ENCODE measurements at regions of chr9 and their contacts with region 1.

Region 1: DNA sequence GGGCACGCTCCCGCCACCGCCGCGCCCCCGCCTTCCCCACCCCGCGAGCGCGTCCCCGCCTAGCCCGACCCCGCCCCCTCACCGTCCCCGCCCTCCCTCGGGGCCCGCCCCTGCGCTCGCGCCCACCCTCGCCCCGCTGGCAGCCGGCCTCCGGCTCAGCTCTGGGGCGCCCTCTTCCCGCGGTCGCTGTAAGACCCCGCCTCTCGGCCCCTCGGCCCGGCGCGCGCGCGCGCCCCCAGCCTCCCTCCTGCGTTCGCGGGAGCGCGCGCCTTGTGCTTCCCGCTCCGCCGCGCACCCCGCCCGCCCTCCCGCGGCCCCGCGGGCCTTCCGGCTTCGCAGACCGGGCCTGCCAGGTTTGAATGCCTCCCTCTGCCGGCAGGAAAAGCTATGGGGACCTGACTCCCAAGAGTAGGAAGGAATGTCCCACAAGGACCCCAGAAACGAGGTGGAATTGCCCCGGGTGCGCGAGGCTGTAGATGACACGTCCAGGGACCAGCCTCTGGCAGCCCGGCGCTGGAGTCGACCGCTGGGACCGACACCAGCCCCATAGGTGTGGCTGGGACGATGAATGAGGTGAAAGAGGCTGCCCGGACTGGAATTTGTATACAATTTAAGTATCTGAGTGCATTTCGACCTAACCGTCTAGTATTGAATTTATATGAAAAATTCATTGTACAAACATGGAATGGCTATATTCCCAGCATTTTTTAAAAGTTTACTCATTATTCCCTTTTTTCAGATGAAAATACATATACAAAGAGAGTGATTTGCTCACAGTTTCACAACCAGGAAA is 416 bp upstream of the PTBP3 start:
- DNase-seq: peak; percentile 93
- H3K4me3 Mint-ChIP-seq: peak overlapping the region; percentile 90
- H3K27ac Mint-ChIP-seq: peak overlapping the region; percentile 95
- H3K4me1 Mint-ChIP-seq: peaks cover 21% of the 10 kb centered on the region
- H3K27me3 Mint-ChIP-seq: no peaks in the 10 kb centered on the region

Region 2: DNA sequence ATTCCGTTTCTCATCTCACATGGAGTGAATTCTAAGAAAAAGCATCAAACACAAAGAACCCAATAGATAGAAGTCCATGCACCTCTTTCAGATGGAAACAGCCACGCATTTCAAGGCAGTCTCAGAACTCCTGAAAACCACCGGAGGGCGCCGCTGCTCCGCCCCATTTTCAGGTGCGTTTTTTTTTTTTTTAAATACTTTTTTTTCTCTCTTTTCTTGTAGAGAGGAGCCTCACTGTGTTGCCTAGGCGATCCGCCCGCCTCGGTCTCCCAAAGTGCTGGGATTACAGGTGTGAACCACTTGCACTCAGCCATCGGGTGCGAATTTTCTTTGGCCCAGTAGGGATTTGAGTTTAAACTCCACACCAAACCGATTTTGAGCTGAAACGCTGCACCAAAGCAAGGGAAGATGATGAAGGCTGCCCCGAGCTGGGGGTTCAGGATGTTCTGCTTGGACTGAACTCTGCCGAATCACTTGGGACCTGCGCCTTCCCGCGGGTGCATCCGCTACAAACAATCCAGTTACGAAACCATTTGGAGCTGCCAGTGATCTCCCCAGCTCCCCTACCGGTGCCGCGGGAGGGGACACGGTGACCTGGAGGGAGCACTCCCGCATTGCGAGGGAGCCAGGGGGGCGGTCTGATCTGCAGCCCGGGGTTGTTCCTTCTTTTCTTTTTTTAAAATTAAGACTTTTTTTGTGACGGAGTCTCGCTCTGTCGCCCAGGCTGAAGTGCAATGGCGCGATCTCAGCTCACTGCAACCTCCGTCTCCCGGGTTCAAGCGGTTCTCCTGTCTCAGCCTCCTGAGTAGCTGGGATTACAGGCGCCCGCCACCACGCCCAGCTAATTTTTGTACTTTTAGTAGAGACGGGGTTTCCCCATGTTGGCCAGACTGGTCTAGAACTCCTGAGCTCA is 735.8 kb before region 1 on chr9:
- CTCF ChIA-PET with region 1: no interaction called
- intact Hi-C with region 1: loop called (anchors 5 kb)
- DNase-seq: peak; percentile 81
- H3K4me3 Mint-ChIP-seq: peak overlapping the region; percentile 80
- H3K27ac Mint-ChIP-seq: no peak overlapping the region
- H3K4me1 Mint-ChIP-seq: peaks cover 12% of the 10 kb centered on the region
- H3K27me3 Mint-ChIP-seq: peaks cover 27% of the 10 kb centered on the region

Region 3: DNA sequence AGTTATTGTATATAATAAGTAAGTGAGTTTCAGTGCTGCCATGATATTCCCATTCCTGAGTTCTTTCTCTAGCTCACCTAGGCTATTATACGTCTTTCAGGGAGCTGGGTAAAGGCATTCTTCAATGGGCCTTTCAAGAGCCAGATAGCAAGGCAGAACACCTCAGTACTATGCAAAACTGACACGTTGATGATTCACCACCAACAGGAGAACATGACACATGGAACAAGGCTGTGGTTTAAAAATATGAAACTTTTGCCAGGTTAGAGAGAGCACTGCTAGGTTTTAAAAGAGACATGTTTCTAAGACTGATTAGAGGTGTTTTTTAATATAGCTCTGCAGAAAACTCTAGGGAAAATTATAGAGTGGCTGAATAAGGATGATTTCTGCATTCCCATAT is 341.3 kb before region 1 on chr9:
- CTCF ChIA-PET with region 1: no interaction called
- intact Hi-C with region 1: loop called (anchors 5 kb)
- DNase-seq: peak; percentile 61
- H3K4me3 Mint-ChIP-seq: no peak overlapping the region
- H3K27ac Mint-ChIP-seq: no peak overlapping the region
- H3K4me1 Mint-ChIP-seq: peaks cover 31% of the 10 kb centered on the region
- H3K27me3 Mint-ChIP-seq: no peaks in the 10 kb centered on the region

Region 4: GRCh38 chr9:112104901-112105300 is 228.9 kb before region 1 on chr9:
- CTCF ChIA-PET with region 1: no interaction called
- intact Hi-C with region 1: no loop called
- DNase-seq: no peak
- H3K4me3 Mint-ChIP-seq: no peak overlapping the region
- H3K27ac Mint-ChIP-seq: no peak overlapping the region
- H3K4me1 Mint-ChIP-seq: no peaks in the 10 kb centered on the region
- H3K27me3 Mint-ChIP-seq: no peaks in the 10 kb centered on the region

Region 5: GRCh38 chr9:112119225-112120029 is 214.4 kb before region 1 on chr9:
- CTCF ChIA-PET with region 1: interaction called, 3 read pairs
- intact Hi-C with region 1: loop called (anchors 1 kb)
- DNase-seq: no peak
- H3K4me3 Mint-ChIP-seq: no peak overlapping the region
- H3K27ac Mint-ChIP-seq: no peak overlapping the region
- H3K4me1 Mint-ChIP-seq: peaks cover 12% of the 10 kb centered on the region
- H3K27me3 Mint-ChIP-seq: no peaks in the 10 kb centered on the region

Region 6: GRCh38 chr9:112315331-112316257 is 18.2 kb before region 1 on chr9:
- CTCF ChIA-PET with region 1: interaction called, 7 read pairs
- intact Hi-C with region 1: loop called (anchors 1 kb)
- DNase-seq: no peak
- H3K4me3 Mint-ChIP-seq: no peak overlapping the region
- H3K27ac Mint-ChIP-seq: no peak overlapping the region
- H3K4me1 Mint-ChIP-seq: peaks cover 68% of the 10 kb centered on the region
- H3K27me3 Mint-ChIP-seq: no peaks in the 10 kb centered on the region

Region 7: DNA sequence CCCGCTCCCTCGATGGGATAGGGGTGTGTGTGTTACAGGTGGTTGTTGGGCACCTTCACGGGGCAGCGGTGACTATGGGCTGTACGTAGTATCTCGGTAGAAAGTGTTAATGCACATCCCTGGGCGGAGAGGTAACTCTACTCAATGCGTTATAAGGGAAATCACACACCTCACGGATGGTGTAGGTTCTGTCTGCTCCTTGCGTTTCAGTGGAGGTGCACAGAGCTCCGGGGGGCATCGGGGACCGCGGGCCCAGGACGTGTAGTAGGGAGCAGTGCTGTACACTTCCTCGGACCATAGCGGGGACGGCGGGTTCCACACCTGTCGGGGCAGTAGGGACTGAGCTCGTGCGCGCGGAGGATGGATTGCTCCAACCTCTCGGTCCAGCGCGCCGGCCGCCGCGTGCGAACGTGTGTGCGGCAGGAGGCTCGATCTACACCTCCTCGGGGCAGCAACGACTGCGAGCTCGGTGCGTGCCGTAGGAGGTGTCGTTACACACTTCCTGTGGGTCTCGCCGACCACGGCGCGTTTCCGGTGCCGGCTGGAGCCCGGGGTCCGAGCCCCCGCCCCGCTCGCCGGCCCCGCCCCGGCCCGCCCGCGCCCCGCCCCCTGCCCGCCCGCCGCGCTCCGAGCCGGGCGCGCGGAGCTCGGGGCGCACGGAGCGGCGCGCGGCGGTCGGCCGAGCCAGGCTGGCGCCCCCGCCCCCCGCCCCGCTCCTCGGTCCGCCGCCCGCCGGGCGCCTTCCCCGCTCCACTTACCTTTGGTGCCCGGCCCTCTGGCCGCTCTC is 152.6 kb after region 1 on chr9 and contains the start of gene KIAA1958:
- CTCF ChIA-PET with region 1: no interaction called
- intact Hi-C with region 1: loop called (anchors 5 kb)
- DNase-seq: peak; percentile 91
- H3K4me3 Mint-ChIP-seq: peak within 1 kb of the TSS; percentile 93
- H3K27ac Mint-ChIP-seq: peak within 1 kb of the TSS; percentile 88
- H3K4me1 Mint-ChIP-seq: peaks cover 34% of the 10 kb centered on the region
- H3K27me3 Mint-ChIP-seq: no peaks in the 10 kb centered on the region
- total RNA-seq, gene KIAA1958: 6.7 to 7.6 TPM

Region 8: DNA sequence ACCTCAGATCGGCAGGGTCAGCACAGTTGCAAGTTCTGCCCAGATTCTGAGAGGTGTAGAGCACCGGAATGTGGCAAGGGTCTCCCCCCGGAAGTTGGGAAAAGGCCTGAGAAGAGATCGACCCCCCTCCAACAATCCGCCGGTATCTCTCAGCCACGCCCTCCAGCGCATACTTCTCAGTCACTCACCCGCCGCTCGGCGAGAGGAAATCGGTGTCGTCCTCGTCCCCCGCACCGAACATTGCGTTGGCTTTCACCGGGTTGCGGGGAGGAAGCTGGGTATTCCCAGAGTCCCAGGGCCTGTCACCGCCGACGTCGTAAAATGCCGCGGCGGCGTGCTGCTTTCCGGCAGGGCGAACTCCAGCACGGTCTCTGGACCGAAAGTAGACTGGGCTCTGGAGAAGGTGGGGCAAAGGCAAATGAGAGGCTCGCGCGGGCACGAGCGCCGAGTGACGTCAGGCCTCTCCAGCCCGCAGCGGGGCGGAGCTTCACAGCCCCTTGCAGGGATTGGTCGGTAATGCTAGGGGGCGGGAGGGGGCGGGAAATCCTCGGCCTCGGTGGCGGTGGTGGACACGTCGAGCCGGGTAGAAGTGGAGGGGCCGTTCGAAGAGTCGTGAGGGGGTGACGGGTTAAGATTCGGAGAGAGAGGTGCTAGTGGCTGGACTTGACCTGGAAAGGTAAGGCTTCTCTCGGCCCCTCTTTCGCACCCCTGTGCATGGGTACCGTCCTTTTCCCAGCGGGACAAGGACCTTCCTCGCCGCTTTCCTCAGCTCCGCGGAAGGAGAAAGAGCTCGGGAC is 887.4 kb after region 1 on chr9 and contains the starts of genes FKBP15 and SLC31A1:
- CTCF ChIA-PET with region 1: no interaction called
- intact Hi-C with region 1: loop called (anchors 5 kb)
- DNase-seq: peak; percentile 98
- H3K4me3 Mint-ChIP-seq: peak within 1 kb of the TSS; percentile 95
- H3K27ac Mint-ChIP-seq: peak within 1 kb of the TSS; percentile 91
- H3K4me1 Mint-ChIP-seq: peaks cover 38% of the 10 kb centered on the region
- H3K27me3 Mint-ChIP-seq: no peaks in the 10 kb centered on the region
- total RNA-seq, gene FKBP15: 14.7 to 15.8 TPM
- total RNA-seq, gene SLC31A1: 8.1 to 8.2 TPM

Measured in activated naive CD4-positive, alpha-beta T cell treated with anti-CD3 and anti-CD28 coated beads for 36 hours (primary cell).